OCI-LY7 (cell line): ENCODE measurements at regions of chr7 and their contacts with region 1.

Region 1: GRCh38 chr7:22156205-22156604 is 200.7 kb downstream of the RAPGEF5 start:
- DNase-seq: no peak
- H3K4me3 ChIP-seq: no peak overlapping the region
- H3K27ac ChIP-seq: no peak overlapping the region
- H3K4me1 ChIP-seq: no peaks in the 10 kb centered on the region
- CTCF ChIP-seq: no peak

Region 2: DNA sequence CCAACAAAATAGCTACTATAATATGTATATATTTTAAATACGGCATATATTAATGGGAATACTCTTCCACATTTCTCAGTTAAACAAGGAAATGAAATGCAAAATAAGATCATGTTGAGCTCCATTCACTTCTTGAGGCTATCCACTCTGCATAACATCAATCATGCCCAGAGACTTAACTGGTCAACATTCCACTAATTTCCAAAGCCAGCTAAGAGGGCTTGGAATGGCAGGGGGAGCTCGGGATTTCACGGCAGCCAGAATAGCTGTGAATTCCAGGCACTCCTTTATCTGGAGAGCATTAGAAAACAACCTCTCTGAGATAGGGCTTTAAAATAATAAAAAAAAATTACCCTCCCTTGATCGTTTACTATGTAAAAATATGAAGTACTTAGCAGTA is 15.6 kb before region 1 on chr7:
- CTCF ChIA-PET with region 1: interaction called, 3 read pairs
- POLR2A ChIA-PET with region 1: interaction called, 19 read pairs
- intact Hi-C with region 1: no loop called
- DNase-seq: no peak
- H3K4me3 ChIP-seq: no peak overlapping the region
- H3K27ac ChIP-seq: no peak overlapping the region
- H3K4me1 ChIP-seq: no peaks in the 10 kb centered on the region
- CTCF ChIP-seq: no peak

Region 3: DNA sequence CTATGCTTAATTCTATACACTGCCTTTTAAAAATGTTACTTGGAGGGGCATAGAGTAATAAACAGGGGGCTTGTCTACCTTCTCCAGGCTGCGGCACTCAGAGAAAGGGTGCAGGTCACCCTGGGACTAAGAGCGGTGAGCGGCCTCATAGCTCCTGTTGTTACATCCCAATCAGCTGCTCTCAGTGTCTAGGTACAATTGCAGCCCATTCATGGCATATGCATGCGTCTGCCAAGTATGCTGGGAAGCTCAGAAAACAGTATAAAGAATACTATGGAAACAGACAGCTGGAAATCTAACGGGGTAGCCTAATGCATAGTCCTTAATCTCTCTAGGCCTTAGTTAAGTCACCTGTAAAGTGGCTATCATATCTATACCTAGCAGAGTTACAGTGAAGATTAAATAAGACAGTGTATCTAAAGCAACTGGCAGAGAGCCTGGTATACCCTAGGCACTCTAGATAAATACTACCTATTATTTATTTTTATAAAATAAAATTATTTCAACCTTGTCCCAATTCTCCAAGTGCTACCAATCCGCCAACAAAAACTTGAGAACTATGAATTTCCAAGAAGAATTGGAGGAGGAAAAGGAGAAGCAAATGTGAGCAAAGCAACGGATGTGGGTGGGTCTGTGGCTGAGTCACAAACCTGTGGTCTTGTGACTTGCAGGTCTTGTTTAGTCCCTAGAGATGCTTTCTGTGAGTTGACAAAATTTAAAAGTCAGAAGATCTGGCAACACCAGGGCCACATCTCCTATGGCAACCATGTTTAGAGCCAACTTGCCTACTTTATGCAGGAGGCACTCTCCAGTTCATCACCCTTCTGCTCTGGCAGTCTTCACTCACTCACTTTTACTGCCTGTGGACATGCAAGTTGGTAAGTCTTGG is 17.7 kb after region 1 on chr7:
- CTCF ChIA-PET with region 1: no interaction called
- POLR2A ChIA-PET with region 1: interaction called, 12 read pairs
- intact Hi-C with region 1: no loop called
- DNase-seq: no peak
- H3K4me3 ChIP-seq: no peak overlapping the region
- H3K27ac ChIP-seq: no peak overlapping the region
- H3K4me1 ChIP-seq: no peaks in the 10 kb centered on the region
- CTCF ChIP-seq: no peak